Endothelial cell of umbilical vein (primary cell): ENCODE measurements at regions of chr3 and their contacts with region 1.

Region 1: GRCh38 chr3:46947981-46948791 is 28.4 kb downstream of the CCDC12 start:
- DNase-seq: peak; percentile 58
- H3K4me3 ChIP-seq: no peak overlapping the region
- H3K27ac ChIP-seq: peak overlapping the region; percentile 39
- H3K4me1 ChIP-seq: peaks cover 70% of the 10 kb centered on the region
- H3K27me3 ChIP-seq: no peaks in the 10 kb centered on the region
- CTCF ChIP-seq: no peak
- POLR2A ChIP-seq: no peak

Region 2: GRCh38 chr3:46935168-46935858 is 12.9 kb before region 1 on chr3:
- CTCF ChIA-PET with region 1: interaction called, 29 read pairs
- POLR2A ChIA-PET with region 1: interaction called, 9 read pairs
- dilution Hi-C with region 1: no loop called
- intact Hi-C with region 1: no loop called
- DNase-seq: peak; percentile 98
- H3K4me3 ChIP-seq: no peak overlapping the region
- H3K27ac ChIP-seq: peak overlapping the region; percentile 87
- H3K4me1 ChIP-seq: peaks cover 62% of the 10 kb centered on the region
- H3K27me3 ChIP-seq: no peaks in the 10 kb centered on the region
- CTCF ChIP-seq: peak; percentile 50 to 72
- POLR2A ChIP-seq: peak; percentile 60

Region 3: DNA sequence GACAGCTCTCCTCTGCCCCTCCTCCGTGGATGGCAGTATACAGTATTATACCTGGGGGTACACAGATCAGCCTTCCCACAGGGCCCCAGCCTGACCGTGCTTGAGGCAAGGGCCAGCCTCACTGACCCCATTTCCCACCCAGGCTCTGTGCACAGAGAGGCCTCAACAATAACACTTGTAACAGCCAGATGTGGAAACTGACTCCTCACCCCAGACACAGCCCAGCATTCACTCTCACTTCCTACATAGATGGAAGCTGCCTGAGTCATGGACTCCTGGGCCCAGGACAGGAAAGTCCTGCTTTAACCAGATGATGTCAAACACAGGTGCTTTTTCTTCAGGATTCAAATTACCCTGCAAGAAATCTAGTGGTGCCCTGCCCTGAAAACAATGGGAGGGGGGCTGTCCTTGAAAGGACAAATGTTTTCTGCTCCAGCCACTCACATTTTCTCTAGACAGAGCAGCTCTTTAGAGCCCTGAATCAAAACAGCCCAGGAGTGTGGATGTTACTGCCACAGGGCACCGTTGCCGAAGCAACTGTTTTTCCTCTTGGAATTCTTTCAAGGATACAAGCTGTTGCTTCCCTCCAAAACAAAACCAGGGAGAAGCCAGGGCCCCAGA is 12.0 kb after region 1 on chr3:
- CTCF ChIA-PET with region 1: interaction called, 7 read pairs
- POLR2A ChIA-PET with region 1: interaction called, 3 read pairs
- dilution Hi-C with region 1: no loop called
- intact Hi-C with region 1: loop called (anchors 1 kb)
- DNase-seq: peak; percentile 92
- H3K4me3 ChIP-seq: peak overlapping the region in 2 of 3 experiments; percentile 0 to 40
- H3K27ac ChIP-seq: peak overlapping the region; percentile 82
- H3K4me1 ChIP-seq: peaks cover 33% of the 10 kb centered on the region
- H3K27me3 ChIP-seq: no peaks in the 10 kb centered on the region
- CTCF ChIP-seq: no peak
- POLR2A ChIP-seq: no peak